HEK293 (cell line): ENCODE measurements at regions of chr1 and their contacts with region 1.

Region 1: GRCh38 chr1:235367000-235367908 is at the start of gene TBCE:
- H3K4me3 ChIP-seq: peak within 1 kb of the TSS; percentile 90
- H3K27ac ChIP-seq: peak within 1 kb of the TSS; percentile 74
- H3K4me1 ChIP-seq: 0 out of 2 replicates have a peak, but pooled peaks cover 4% of the 10 kb centered on the region
- CTCF ChIP-seq: peak; percentile 56; the same call in 1 of the 2 replicates

Region 2: GRCh38 chr1:235328357-235329138 is 38.7 kb before region 1 on chr1 and contains the start of gene GGPS1:
- CTCF ChIA-PET with region 1: no interaction called
- POLR2A ChIA-PET with region 1: interaction called, 11 read pairs
- H3K4me3 ChIP-seq: peak within 1 kb of the TSS; percentile 97
- H3K27ac ChIP-seq: peak within 1 kb of the TSS; percentile 95
- H3K4me1 ChIP-seq: peaks cover 38% of the 10 kb centered on the region
- CTCF ChIP-seq: no peak; the same call in 1 of the 2 replicates

Region 3: DNA sequence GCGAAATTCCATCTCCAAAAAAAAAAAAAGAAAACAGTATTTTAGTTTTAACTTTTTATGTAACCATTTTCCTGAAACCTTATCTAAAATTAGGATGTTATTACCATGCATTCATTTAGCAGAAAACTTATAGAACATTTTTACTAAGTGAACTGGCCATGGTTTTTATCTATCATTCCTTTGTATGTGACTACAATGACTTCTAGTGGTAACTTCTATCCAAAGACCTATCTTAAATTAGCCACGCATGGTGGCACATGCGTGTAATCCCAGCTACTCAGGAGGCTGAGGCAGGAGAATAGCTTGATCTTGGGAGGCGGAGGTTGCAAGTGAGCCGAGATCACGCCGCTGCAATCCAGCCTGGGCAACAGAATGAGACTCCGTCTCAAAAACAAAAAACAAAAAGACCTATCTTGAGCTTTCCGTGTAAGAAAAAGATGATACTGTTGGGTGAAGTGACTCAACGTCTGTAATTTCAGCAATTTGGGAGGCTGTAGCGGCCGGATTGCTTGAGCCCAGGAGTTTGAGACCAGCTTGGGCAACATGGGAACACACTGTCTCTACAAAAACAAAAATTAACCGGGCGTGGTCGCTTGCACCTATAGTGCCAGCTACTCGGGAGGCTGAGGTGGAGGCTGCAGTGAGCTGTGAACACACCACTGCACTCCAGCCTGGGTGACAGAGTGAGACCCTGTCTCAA is 27.4 kb before region 1 on chr1:
- CTCF ChIA-PET with region 1: interaction called, 3 read pairs
- POLR2A ChIA-PET with region 1: interaction called, 10 read pairs
- H3K4me3 ChIP-seq: no peak overlapping the region
- H3K27ac ChIP-seq: no peak overlapping the region
- H3K4me1 ChIP-seq: no peaks in the 10 kb centered on the region
- CTCF ChIP-seq: no peak